Activated B cell treated with CpG ODN at 0.5 μM for 24 hours (primary cell): ENCODE measurements at regions of chr16 and their contacts with region 1.

Region 1: GRCh38 chr16:4506450-4506849 is 30.3 kb downstream of the HMOX2 start:
- DNase-seq: peak; percentile 31
- ATAC-seq: peak; percentile 39
- H3K4me3 Mint-ChIP-seq: peak overlapping the region; percentile 29
- H3K27ac Mint-ChIP-seq: peak overlapping the region; percentile 93
- H3K4me1 Mint-ChIP-seq: peaks cover 40% of the 10 kb centered on the region
- H3K27me3 Mint-ChIP-seq: no peaks in the 10 kb centered on the region
- CTCF ChIP-seq: peak; percentile 46

Region 2: GRCh38 chr16:4425378-4426020 is 81.0 kb before region 1 on chr16 and contains the start of gene DNAJA3:
- CTCF ChIA-PET with region 1: no interaction called
- POLR2A ChIA-PET with region 1: no interaction called
- intact Hi-C with region 1: no loop called
- DNase-seq: peak; percentile 93
- ATAC-seq: peak; percentile 90
- H3K4me3 Mint-ChIP-seq: peak within 1 kb of the TSS; percentile 97
- H3K27ac Mint-ChIP-seq: peak within 1 kb of the TSS; percentile 100
- H3K4me1 Mint-ChIP-seq: peaks cover 31% of the 10 kb centered on the region
- H3K27me3 Mint-ChIP-seq: no peaks in the 10 kb centered on the region
- CTCF ChIP-seq: no peak
- total RNA-seq, gene DNAJA3: 55.3 and 62.6 TPM in 2 replicates

Region 3: GRCh38 chr16:4538350-4539235 is 32.1 kb after region 1 on chr16 and contains the start of gene CDIP1:
- CTCF ChIA-PET with region 1: interaction called, 116 read pairs
- POLR2A ChIA-PET with region 1: interaction called, 21 read pairs
- intact Hi-C with region 1: loop called (anchors 1 kb)
- DNase-seq: peak; percentile 89
- ATAC-seq: peak; percentile 91
- H3K4me3 Mint-ChIP-seq: peak within 1 kb of the TSS; percentile 76
- H3K27ac Mint-ChIP-seq: peak within 1 kb of the TSS; percentile 73
- H3K4me1 Mint-ChIP-seq: peaks cover 15% of the 10 kb centered on the region
- H3K27me3 Mint-ChIP-seq: peaks cover 1% of the 10 kb centered on the region
- CTCF ChIP-seq: no peak
- total RNA-seq, gene CDIP1: 12.5 and 12.9 TPM in 2 replicates

Region 4: DNA sequence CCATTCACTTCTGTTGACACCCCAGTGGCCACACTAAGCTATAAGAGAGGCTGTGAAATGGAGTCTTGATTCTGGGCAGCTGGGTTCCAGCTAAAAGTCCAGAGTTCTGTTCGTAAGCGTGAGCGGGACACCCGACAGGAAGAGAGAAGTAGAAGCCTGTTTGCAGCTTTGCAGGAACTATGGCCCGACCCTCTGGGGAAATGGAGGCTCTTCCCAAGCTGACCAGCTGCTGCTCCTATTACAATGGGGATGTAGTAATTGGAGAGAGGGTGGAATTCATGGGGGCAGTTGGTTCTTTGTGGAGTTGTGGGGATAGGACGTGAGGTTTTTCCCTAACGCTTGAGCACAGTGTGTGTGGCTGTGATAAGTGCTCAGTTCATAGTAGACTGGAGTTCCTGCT is 79.8 kb after region 1 on chr16:
- CTCF ChIA-PET with region 1: interaction called, 45 read pairs
- POLR2A ChIA-PET with region 1: no interaction called
- intact Hi-C with region 1: no loop called
- DNase-seq: no peak
- ATAC-seq: no peak
- H3K4me3 Mint-ChIP-seq: no peak overlapping the region
- H3K27ac Mint-ChIP-seq: no peak overlapping the region
- H3K4me1 Mint-ChIP-seq: peaks cover 2% of the 10 kb centered on the region
- H3K27me3 Mint-ChIP-seq: peaks cover 15% of the 10 kb centered on the region
- CTCF ChIP-seq: no peak

Region 5: GRCh38 chr16:4649744-4650442 is 143.4 kb after region 1 on chr16:
- CTCF ChIA-PET with region 1: interaction called, 5 read pairs
- POLR2A ChIA-PET with region 1: no interaction called
- intact Hi-C with region 1: loop called (anchors 1 kb)
- DNase-seq: no peak
- ATAC-seq: no peak
- H3K4me3 Mint-ChIP-seq: no peak overlapping the region
- H3K27ac Mint-ChIP-seq: no peak overlapping the region
- H3K4me1 Mint-ChIP-seq: peaks cover 27% of the 10 kb centered on the region
- H3K27me3 Mint-ChIP-seq: no peaks in the 10 kb centered on the region
- CTCF ChIP-seq: no peak

Region 6: GRCh38 chr16:5033256-5034169 is 527.1 kb after region 1 on chr16 and contains the start of gene NAGPA:
- CTCF ChIA-PET with region 1: no interaction called
- POLR2A ChIA-PET with region 1: interaction called, 3 read pairs
- intact Hi-C with region 1: loop called (anchors 5 kb)
- DNase-seq: peak; percentile 82
- ATAC-seq: peak; percentile 87
- H3K4me3 Mint-ChIP-seq: peak within 1 kb of the TSS; percentile 87
- H3K27ac Mint-ChIP-seq: peak within 1 kb of the TSS; percentile 91
- H3K4me1 Mint-ChIP-seq: peaks cover 18% of the 10 kb centered on the region
- H3K27me3 Mint-ChIP-seq: no peaks in the 10 kb centered on the region
- CTCF ChIP-seq: no peak
- total RNA-seq, gene NAGPA: 23.8 and 24.2 TPM in 2 replicates